OCI-LY7 (cell line): ENCODE measurements at regions of chr10 and their contacts with region 1.

Region 1: DNA sequence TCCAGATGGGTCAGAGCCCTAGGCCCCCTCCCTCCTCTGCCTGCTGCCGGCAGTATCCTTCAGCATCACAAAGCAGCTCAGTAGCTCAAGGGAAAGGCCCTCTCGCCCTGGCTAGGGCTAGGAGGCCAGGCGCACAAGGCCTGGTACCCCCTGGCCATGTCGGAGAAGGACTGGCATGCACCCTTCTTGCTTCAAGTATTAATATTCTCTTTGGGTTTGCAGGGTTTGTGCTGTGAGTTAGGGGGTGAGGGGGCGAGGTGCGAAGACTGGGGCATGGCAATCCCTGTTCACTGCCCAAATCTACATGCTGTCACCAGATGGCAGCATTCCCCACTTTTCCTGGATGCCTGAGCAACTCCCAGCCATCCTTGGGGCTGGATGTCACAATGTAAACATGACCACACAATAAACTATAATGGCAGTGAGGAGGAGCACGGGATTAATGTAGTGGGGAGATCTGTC is 105.2 kb downstream of the NEURL1 start:
- DNase-seq: peak; percentile 55
- H3K4me3 ChIP-seq: no peak overlapping the region
- H3K27ac ChIP-seq: no peak overlapping the region
- H3K4me1 ChIP-seq: no peaks in the 10 kb centered on the region
- CTCF ChIP-seq: peak; percentile 81

Region 2: DNA sequence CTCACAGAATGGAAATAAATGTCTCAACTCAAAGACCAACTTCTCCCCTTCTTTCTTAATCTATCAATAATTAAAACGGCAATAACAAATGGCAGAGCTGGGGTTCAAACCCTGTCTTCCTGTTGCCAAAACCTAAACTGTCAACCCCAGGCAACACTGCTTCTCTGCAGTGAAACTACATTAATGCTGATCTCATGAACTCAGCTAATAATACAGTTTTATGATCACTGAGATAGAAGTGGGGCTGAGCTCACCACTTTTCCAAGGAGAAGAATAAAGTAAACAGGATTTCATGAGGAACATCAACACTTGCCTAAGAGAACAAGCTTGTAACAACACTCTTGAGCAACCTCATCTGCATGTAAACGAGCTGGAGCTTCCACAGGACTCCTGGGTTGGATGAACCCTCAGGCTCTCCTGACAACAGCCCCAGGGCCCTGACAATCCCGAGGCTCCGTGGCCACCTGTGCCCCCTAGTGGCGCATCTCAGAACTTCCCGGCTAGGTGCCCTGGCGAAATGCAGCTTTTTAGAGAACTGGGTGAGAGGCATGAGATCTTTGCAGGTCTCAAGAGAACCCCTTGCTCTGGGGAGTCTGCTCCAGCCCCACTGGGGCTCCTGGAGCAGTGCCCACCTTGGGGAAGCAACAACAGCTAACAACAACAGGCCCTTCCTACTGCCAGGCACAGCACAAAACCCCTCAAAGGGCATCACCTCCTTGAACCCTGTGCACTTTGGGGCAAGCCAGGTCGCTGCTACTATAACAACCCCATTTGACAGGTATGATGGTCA is 87.4 kb after region 1 on chr10:
- CTCF ChIA-PET with region 1: interaction called, 5 read pairs
- POLR2A ChIA-PET with region 1: no interaction called
- intact Hi-C with region 1: loop called (anchors 1 kb)
- DNase-seq: peak; percentile 73
- H3K4me3 ChIP-seq: no peak overlapping the region
- H3K27ac ChIP-seq: no peak overlapping the region
- H3K4me1 ChIP-seq: peaks cover 4% of the 10 kb centered on the region
- CTCF ChIP-seq: peak; percentile 97